H1 (cell line): ENCODE measurements at regions of chr9 and their contacts with region 1.

Region 1: DNA sequence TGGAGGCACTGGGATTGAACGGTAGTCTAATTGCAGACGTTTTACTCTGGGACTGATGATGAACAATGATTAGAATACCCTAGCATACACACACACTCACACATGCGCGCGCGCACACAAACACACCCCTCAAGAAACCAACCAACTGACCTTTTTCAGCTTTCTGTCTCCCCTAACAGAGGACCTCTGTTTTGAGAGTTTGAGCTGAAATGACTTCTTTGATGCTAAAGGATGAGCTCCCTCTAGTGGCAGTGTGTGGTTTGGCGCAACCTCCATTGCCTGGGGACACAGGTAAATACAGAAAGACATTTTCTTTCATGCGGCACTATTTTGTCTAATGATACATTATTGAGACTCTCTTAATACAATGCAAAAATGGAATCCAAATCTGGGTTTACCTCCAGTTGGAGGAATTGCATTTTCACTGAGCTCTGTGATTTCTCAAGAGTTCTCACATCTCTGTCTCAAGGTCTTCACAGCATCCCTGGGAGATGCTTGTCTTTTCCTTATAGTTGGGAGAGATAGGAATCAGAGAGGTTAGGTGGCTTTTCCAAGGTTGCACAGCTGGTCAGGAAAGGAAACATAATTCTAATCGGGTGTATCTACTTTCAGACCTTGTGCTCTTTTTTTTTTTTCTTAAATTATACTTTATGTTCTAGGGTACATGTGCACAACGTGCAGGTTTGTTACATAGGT is 187.5 kb downstream of the TMEM38B start:
- DNase-seq: peak; percentile 54 to 88
- H3K4me3 ChIP-seq: no peak overlapping the region
- H3K27ac ChIP-seq: no peak overlapping the region
- H3K4me1 ChIP-seq: no peaks in the 10 kb centered on the region
- H3K27me3 ChIP-seq: no peaks in the 10 kb centered on the region
- CTCF ChIP-seq: peak; percentile 62 to 91 (median 76)
- EP300 ChIP-seq: no peak
- POLR2A ChIP-seq: no peak
- RAD21 ChIP-seq: peak; percentile 84 to 89

Region 2: DNA sequence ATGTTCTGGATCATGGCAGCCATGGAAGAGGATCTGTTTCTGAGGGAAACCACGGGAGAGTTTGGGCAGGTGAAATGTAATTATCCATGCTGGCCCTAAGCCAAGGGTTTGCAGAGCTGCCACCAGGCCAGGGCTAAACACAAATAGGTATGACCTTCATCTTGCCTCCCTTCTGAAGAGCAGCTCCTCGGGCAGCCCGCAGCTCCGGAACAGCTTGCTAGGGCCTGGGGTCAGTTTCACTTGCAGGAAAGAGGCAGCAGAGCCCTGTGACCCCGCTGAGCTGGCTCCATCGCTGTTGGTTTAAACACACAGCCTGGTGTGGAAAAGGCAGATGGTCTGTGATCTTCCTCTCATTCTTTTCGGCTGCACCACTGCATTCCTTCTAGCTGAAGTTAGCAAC is 46.1 kb before region 1 on chr9:
- CTCF ChIA-PET with region 1: interaction called, 129 read pairs
- POLR2A ChIA-PET with region 1: no interaction called
- DNase-seq: no peak
- H3K4me3 ChIP-seq: no peak overlapping the region
- H3K27ac ChIP-seq: no peak overlapping the region
- H3K4me1 ChIP-seq: peaks cover 0 to 7% (median 1%) of the 10 kb centered on the region in 4 experiments; a peak in 3 of 7 replicates
- H3K27me3 ChIP-seq: no peaks in the 10 kb centered on the region; a peak in 1 of 7 replicates
- CTCF ChIP-seq: no peak
- EP300 ChIP-seq: no peak
- POLR2A ChIP-seq: no peak
- RAD21 ChIP-seq: no peak

Region 3: DNA sequence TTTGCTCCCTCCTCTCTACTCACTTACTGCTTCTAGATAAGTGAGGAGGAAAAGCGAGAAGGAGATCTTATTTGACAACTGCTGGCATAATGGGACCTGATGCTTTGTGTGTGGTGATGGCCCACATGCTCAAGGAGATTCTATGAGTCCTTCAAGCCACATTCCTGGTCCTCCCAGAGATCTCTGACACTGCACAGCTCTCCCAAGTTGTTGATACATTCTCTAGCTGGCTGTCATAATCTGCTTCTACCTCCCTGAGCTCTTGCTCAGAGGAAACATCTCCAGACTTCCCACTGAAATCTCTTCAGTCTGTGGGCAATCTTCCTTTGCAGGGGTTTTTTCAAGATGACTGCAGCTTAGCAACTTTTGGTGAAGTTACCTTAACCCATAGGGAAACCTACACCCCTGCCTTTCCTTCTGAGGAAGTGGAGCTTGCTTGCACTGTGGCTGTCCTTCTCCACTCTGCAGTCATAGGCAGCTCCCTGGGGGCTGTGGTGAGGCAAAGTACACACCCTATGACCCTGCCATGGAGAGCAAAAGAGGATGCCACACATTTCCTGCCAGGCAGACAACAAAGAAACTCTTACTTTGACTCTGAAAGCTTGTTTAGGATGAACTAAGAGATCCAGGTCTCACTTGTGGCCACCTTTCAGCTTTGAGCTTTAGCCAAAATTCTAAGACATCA is 23.7 kb before region 1 on chr9:
- CTCF ChIA-PET with region 1: interaction called, 16 read pairs
- POLR2A ChIA-PET with region 1: no interaction called
- DNase-seq: no peak
- H3K4me3 ChIP-seq: no peak overlapping the region
- H3K27ac ChIP-seq: no peak overlapping the region
- H3K4me1 ChIP-seq: no peaks in the 10 kb centered on the region
- H3K27me3 ChIP-seq: no peaks in the 10 kb centered on the region
- CTCF ChIP-seq: no peak
- EP300 ChIP-seq: no peak
- POLR2A ChIP-seq: no peak
- RAD21 ChIP-seq: no peak

Region 4: DNA sequence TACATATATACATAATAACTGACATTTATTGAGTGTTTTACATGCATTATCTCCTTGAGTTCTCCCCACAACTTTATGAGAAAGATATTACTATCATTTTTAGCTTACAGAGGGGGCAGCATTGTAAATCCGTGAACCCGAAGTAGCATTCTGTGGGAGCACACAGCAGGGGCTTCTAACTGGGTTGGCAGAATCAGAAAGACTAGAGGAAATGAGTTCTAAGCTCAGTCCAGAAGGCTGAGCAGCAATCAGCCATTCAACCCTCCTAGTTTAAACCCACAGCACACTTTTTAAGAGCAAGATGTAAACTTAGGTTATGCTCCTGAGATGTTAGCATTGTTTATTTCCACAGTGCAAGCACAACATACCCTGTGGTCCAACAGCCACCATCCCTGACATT is 10.3 kb before region 1 on chr9:
- CTCF ChIA-PET with region 1: interaction called, 18 read pairs
- POLR2A ChIA-PET with region 1: no interaction called
- DNase-seq: no peak
- H3K4me3 ChIP-seq: no peak overlapping the region
- H3K27ac ChIP-seq: no peak overlapping the region
- H3K4me1 ChIP-seq: no peaks in the 10 kb centered on the region
- H3K27me3 ChIP-seq: no peaks in the 10 kb centered on the region
- CTCF ChIP-seq: no peak
- EP300 ChIP-seq: no peak
- POLR2A ChIP-seq: no peak
- RAD21 ChIP-seq: no peak

Region 5: DNA sequence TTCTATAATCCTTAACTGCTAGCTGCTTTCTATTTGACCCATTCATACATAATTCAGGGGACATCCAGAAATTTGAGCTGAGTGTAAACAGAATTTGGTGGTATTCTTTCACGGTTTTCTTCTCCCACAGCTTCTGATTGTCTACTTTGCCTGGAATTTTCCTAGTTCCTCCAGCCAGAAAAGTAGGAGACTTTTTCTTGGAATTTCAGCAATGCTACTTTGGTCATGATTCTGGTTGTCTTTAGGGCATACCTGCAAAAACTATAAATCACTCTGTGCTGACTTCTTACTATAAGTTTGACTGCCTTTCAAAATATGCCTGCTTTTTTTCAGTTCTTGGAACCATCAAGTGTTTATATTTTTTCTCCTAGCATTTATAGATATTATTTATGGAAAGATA is 72.7 kb after region 1 on chr9:
- CTCF ChIA-PET with region 1: interaction called, 13 read pairs
- POLR2A ChIA-PET with region 1: no interaction called
- DNase-seq: no peak
- H3K4me3 ChIP-seq: no peak overlapping the region
- H3K27ac ChIP-seq: no peak overlapping the region
- H3K4me1 ChIP-seq: peaks cover 0 to 7% (median 2%) of the 10 kb centered on the region in 4 experiments; a peak in 3 of 7 replicates
- H3K27me3 ChIP-seq: no peaks in the 10 kb centered on the region
- CTCF ChIP-seq: no peak
- EP300 ChIP-seq: no peak
- POLR2A ChIP-seq: no peak
- RAD21 ChIP-seq: no peak